GM13977 (cell line): ENCODE measurements at regions of chr16 and their contacts with region 1.

Region 1: DNA sequence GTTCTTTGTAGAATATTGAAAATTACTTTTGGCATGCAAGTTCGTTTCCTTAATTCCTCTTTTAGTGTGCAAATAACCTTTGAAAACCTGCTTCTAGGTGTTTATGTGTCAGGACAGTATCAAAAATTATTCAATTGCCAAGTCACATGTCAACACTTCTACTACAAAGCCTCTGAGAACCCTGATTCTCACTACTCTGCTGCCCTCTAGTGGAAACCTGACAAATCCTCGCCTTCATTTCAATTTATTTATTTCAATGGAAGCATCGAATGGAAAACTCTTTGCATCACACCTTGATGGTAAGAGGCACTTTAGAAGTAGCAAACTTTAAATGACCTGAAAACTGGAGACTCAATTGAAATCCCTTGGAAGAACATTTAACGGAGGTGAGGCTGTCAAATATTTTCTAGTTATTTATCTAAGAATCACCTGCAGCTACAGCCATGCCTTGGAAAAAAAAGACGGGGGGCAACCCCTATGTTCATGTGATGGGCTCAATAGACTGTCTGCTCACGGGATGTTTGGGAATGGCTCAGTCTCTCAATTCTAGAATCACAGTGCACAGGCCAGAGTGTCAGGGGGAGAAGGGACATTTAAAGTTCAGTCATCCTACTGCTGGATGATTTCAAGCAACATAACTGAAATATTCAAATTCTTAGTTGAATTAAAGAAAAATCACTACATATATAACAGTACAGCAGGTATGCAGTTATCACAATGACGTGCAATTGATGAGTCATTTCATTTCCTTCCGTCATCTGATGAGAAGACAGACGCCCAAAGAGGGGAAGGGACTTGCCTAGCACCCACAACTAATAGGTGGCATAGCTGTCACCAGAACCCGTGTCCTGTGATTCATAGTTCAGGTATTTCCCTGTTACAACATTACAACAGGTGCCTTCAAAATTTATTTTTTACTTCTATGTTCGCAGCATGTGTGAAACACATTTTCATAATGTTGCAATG is 563.9 kb downstream of the TOX3 start:
- DNase-seq: peak; percentile 40
- CTCF ChIP-seq: peak; percentile 75

Region 2: GRCh38 chr16:51818342-51818944 is 164.6 kb before region 1 on chr16:
- in situ Hi-C with region 1: loop called (anchors 25 kb)
- DNase-seq: peak; percentile 36
- CTCF ChIP-seq: peak; percentile 69

Region 3: GRCh38 chr16:52066962-52067361 is 84.0 kb after region 1 on chr16:
- in situ Hi-C with region 1: no loop called
- DNase-seq: no peak
- CTCF ChIP-seq: no peak